ENCODE measurements at regions of chr13 and their contacts with region 1.

Region 1: GRCh38 chr13:48769107-48769704 is 115.5 kb downstream of the CYSLTR2 start:
- H3K4me3 Mint-ChIP-seq: no peak overlapping the region
- H3K27ac Mint-ChIP-seq: no peak overlapping the region
- H3K4me1 Mint-ChIP-seq: peaks cover 20% of the 10 kb centered on the region
- H3K27me3 Mint-ChIP-seq: no peaks in the 10 kb centered on the region

Region 2: DNA sequence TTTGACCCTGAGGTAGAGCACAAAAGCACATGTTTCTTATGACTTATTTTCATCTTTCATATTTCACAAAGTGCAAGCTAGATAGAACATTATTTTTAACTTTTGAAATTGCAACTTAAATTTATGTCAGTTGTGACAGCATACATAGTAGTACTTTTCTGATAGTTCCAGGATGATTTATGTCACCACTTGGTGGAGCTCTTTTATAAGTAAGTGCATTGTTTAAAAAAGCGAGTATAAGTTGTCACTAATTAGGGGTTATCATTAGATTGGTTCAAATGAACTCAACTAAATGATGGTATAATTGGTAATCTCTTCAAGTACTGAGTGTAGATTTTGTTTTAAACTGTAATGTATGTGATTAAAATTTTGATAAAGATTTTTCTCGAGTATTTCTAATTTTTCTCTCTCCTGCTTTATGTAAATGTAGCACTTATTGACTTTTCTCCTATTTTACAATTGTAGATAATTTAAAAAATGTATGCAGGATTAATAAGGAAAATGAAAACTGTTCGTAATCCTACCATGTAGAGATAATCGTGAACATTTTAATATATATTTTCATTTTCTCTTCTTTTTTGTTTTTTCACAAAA is 434.6 kb before region 1 on chr13:
- intact Hi-C with region 1: loop called (anchors 2 kb)
- H3K4me3 Mint-ChIP-seq: no peak overlapping the region
- H3K27ac Mint-ChIP-seq: no peak overlapping the region
- H3K4me1 Mint-ChIP-seq: peaks cover 29% of the 10 kb centered on the region
- H3K27me3 Mint-ChIP-seq: no peaks in the 10 kb centered on the region

Region 3: DNA sequence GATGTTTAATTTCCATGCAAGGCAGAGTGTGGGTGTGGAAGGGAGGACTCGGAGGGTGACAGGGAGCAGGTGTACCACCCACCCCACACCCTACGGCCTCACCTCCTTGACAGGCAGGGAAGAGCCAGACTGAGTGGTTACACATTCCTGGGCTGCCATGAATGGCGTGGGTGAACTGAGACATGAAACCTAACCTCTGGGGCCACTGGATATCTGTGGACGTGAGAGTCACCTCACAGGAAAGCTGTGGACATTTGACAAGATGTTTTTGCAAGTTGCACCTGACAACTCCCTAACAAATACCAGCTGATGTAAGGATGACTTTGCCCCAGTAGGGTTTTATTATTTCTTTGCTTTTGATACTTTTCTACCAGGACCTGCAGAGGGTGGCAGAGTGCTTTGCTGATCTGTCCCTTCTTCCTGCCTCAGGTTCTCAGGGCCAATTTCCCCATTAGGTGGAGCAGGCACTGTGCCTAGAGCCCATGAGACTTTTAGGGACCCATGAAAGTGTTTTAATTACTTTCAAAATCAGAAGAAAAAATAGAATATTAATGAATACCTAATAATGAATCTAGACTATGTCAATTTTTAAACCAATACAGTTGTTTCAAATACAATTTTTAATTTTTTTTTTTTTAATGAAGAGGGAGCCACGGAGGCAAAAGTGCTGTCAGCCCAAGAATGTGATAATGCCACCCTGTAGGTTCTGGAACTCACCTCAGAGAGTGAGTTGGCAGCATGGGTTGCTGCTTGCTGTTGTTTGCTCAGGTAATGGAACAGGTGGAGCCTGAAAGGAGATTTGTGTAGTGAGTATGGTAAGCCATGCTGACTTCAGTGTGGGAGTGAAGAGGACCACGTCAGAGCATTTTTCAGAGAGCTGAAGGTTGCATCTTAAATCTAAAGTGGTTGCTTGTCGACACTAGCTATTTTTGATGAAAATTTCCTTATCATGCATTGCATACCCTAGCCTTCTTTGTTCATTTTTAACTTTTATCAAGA is 173.5 kb before region 1 on chr13:
- intact Hi-C with region 1: loop called (anchors 1 kb)
- H3K4me3 Mint-ChIP-seq: no peak overlapping the region
- H3K27ac Mint-ChIP-seq: no peak overlapping the region
- H3K4me1 Mint-ChIP-seq: peaks cover 13% of the 10 kb centered on the region
- H3K27me3 Mint-ChIP-seq: no peaks in the 10 kb centered on the region

Region 4: GRCh38 chr13:48636550-48636949 is 132.7 kb before region 1 on chr13:
- intact Hi-C with region 1: no loop called
- H3K4me3 Mint-ChIP-seq: no peak overlapping the region
- H3K27ac Mint-ChIP-seq: peak overlapping the region; percentile 38
- H3K4me1 Mint-ChIP-seq: peaks cover 15% of the 10 kb centered on the region
- H3K27me3 Mint-ChIP-seq: no peaks in the 10 kb centered on the region

Region 5: DNA sequence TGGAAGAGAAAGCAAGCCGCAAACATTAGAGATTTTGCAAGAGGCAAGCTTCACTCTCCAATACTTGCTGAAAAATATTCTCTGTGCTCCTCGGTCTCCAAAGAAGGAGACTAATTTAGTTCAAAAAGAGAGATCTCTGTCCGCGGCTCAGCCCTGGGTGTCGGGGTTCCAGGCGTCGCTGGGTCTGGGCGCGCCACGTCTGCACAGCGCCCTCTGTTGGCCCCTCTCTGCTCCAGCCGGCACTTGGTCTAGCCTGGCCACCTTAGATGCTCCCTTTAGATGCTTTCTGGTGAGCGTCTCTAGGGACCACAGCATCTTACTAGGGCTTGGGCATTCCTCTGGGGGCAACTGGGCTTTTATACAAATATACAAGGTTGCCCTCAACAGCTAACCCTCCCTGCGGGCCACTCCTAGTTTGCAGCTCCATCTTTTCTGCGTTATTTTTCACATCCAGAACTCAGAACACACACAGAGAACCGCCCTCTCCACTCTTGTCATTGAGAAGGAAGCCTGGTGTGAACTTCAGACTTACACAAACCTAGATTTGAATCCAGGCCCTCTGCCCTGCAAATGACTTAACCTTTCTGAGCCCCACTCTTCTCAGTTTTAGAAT is 37.1 kb before region 1 on chr13:
- intact Hi-C with region 1: loop called (anchors 1 kb)
- H3K4me3 Mint-ChIP-seq: peak overlapping the region; percentile 73
- H3K27ac Mint-ChIP-seq: no peak overlapping the region
- H3K4me1 Mint-ChIP-seq: peaks cover 31% of the 10 kb centered on the region
- H3K27me3 Mint-ChIP-seq: no peaks in the 10 kb centered on the region